ENCODE measurements at regions of chr18 and their contacts with region 1.

Region 1: DNA sequence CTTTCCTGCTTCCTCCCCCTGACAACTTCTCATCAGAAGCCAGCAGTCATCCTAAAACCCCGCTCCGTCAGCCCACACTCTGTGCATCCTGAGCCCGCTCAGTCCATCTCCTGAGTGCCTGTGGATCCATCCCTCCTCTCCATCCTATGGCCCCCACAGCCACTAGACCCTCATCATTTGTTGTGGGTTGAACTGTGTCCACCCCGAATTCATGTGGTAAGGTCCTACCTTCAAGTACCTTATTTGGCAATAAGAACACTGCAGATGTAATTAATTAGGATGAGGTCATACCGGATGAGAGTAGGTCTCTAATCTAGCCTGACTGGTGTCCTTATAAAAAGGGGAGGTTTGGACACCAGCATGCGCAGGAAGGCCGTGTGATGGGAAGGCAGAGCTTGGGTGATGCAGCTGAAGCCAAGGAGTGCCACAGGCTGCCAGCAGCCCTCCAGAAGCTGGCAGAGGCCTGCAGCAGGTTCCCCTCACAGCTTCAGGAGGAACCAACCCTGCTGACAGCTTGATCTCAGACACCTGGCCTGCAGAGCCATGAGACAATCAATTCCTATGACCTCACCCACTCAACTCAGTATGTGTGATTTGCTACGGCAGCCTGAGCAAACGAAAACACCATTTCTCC is 192.4 kb downstream of the ZBTB7C start:
- DNase-seq: peak in 2 of 5 donors; percentile 60 to 69
- ATAC-seq: peak; percentile 43 to 86 (median 76)
- H3K4me3 ChIP-seq: no peak overlapping the region
- H3K27ac ChIP-seq: peak overlapping the region in 7 of 12 donors; percentile 14 to 73 (median 41)
- H3K4me1 ChIP-seq: peaks cover 0 to 21% (median 7%) of the 10 kb centered on the region in 12 donors
- H3K27me3 ChIP-seq: no peaks in the 10 kb centered on the region
- CTCF ChIP-seq: no peak
- POLR2A ChIP-seq: no peak

Region 2: GRCh38 chr18:48136531-48137332 is 80.0 kb before region 1 on chr18:
- intact Hi-C with region 1: loop called in 1 of 10 experiments (anchors 5 kb)
- DNase-seq: no peak
- ATAC-seq: peak in 2 of 4 donors; percentile 11 to 35
- H3K4me3 ChIP-seq: peak overlapping the region; percentile 44 to 79 (median 62)
- H3K27ac ChIP-seq: peak overlapping the region in 4 of 12 donors; percentile 25 to 65 (median 43)
- H3K4me1 ChIP-seq: peaks cover 0 to 41% (median 17%) of the 10 kb centered on the region in 12 donors
- H3K27me3 ChIP-seq: peaks cover 0 to 29% (median 4%) of the 10 kb centered on the region in 9 donors
- CTCF ChIP-seq: no peak
- POLR2A ChIP-seq: no peak

Region 3: GRCh38 chr18:48161191-48161910 is 55.4 kb before region 1 on chr18:
- intact Hi-C with region 1: no loop called
- DNase-seq: peak; percentile 86 to 90 (median 89)
- ATAC-seq: peak; percentile 93 to 98 (median 96)
- H3K4me3 ChIP-seq: peak overlapping the region; percentile 41 to 96 (median 68)
- H3K27ac ChIP-seq: peak overlapping the region; percentile 80 to 96 (median 90)
- H3K4me1 ChIP-seq: peaks cover 1 to 43% (median 23%) of the 10 kb centered on the region in 12 donors
- H3K27me3 ChIP-seq: no peaks in the 10 kb centered on the region
- CTCF ChIP-seq: no peak
- POLR2A ChIP-seq: peak in 1 of 2 donors; percentile 52

Region 4: DNA sequence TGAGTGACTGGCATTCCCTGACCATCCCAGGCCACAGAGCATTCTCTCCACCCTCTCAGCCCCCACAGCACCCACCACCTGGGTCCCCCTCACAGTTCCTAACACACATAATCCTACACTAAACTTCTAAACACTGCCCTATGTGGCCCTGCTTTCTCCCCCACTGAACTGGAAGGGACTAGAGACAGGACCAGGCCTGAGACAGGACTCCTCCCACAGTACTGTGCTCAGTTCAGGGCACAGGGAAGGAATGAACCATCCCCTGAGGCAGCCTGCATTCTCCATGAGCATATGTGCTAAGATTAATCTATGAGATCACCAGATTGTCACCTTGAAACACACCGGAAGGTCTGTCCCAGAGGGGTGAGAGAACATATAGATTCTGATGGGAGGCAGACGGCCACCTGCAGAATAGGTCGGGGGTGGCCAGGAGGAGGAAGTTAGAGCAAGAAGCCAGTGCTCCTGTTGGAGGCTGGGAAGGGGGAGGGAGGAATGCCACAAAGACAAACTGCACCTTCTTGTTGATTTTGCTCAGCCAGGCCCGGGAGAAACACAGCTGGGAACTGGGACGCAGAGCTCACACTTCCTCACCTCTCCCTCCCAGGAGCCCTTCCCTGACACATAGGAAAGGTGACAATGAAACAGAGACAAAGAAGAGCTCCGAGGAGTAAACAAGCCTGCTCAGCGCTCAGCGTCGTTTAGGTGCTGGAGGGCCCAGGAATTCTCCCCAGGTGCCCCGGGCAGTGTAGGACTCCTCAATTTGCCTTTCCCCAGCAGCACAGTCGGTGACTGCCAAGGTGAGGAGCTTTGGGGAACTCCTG is 140.3 kb after region 1 on chr18:
- intact Hi-C with region 1: no loop called
- DNase-seq: no peak
- ATAC-seq: peak in 1 of 4 donors; percentile 50
- H3K4me3 ChIP-seq: no peak overlapping the region
- H3K27ac ChIP-seq: no peak overlapping the region
- H3K4me1 ChIP-seq: peaks cover 0 to 14% (median 0%) of the 10 kb centered on the region in 12 donors
- H3K27me3 ChIP-seq: no peaks in the 10 kb centered on the region
- CTCF ChIP-seq: no peak
- POLR2A ChIP-seq: no peak

Measured in heart left ventricle (tissue), 16 donors.